ENCODE measurements at regions of chr10 and their contacts with region 1.

Region 1: GRCh38 chr10:109883859-109884771 is 39.2 kb downstream of the XPNPEP1 start:
- DNase-seq: peak; percentile 72
- H3K4me3 ChIP-seq: no peak overlapping the region
- H3K27ac ChIP-seq: no peak overlapping the region
- H3K4me1 ChIP-seq: peaks cover 4% of the 10 kb centered on the region
- H3K27me3 ChIP-seq: no peaks in the 10 kb centered on the region
- CTCF ChIP-seq: peak; percentile 94 to 98

Region 2: GRCh38 chr10:109956454-109957091 is 72.5 kb after region 1 on chr10:
- CTCF ChIA-PET with region 1: no interaction called
- dilution Hi-C with region 1: no loop called
- in situ Hi-C with region 1: no loop called
- intact Hi-C with region 1: loop called (anchors 1 kb)
- DNase-seq: no peak
- H3K4me3 ChIP-seq: no peak overlapping the region
- H3K27ac ChIP-seq: no peak overlapping the region
- H3K4me1 ChIP-seq: no peaks in the 10 kb centered on the region
- H3K27me3 ChIP-seq: no peaks in the 10 kb centered on the region
- CTCF ChIP-seq: peak; percentile 56 to 60

Region 3: DNA sequence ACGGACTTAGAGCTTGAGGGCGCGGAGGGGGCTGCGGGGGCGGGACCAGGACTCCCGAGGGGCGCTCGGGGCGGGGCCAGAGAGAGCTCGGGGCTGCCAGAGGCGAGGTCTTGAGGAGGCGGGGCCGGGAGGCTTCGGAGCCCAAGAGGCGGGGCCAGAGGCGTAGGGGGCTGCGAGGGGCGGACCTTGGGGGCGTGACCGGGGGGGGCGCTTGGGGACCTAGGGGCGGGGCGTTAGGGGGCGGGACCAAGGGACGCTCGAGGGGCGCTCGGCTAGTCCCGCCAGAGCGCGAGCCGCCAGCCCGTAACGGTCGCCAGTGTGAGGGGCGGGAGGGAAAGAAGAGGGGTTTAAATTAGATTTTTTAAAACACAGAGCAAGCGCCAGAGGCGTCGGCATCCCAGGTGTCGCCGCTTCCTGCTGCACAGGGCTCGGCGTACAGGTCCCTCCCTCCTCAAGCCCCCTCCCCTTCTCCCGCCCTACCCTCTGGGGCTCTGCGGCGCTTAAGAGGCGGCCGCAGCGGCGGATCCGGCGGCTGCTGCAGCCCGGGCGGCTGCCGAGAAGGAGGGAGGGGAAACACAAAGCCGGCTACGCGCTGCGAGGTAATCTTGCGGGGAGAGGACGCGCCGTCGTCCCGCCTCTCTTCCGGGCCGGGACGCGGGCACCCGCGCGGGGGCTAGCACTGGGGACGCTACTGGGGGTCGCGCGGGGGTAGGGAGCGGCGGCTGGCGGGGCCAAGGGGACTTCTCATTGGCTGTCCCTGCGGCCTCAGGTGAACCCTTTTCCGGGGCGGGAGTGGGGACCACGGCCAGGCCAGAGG is 123.8 kb after region 1 on chr10 and contains the start of gene ADD3:
- CTCF ChIA-PET with region 1: interaction called, 3 read pairs
- dilution Hi-C with region 1: no loop called
- in situ Hi-C with region 1: no loop called
- intact Hi-C with region 1: loop called (anchors 1 kb)
- DNase-seq: peak; percentile 69
- H3K4me3 ChIP-seq: peak within 1 kb of the TSS; percentile 81 to 91 (median 85)
- H3K27ac ChIP-seq: peak within 1 kb of the TSS; percentile 34
- H3K4me1 ChIP-seq: peaks cover 30% of the 10 kb centered on the region
- H3K27me3 ChIP-seq: no peaks in the 10 kb centered on the region
- CTCF ChIP-seq: no peak
- total RNA-seq, gene ADD3: 24.8 to 67.5 TPM

Region 4: GRCh38 chr10:110137142-110137545 is 253.0 kb after region 1 on chr10:
- CTCF ChIA-PET with region 1: interaction called, 3 read pairs
- dilution Hi-C with region 1: no loop called
- in situ Hi-C with region 1: loop called in 1 of 2 experiments (anchors 5 kb)
- intact Hi-C with region 1: loop called (anchors 1 kb)
- DNase-seq: peak; percentile 61
- H3K4me3 ChIP-seq: no peak overlapping the region
- H3K27ac ChIP-seq: no peak overlapping the region
- H3K4me1 ChIP-seq: peaks cover 15% of the 10 kb centered on the region
- H3K27me3 ChIP-seq: no peaks in the 10 kb centered on the region
- CTCF ChIP-seq: peak; percentile 60 to 72

Region 5: DNA sequence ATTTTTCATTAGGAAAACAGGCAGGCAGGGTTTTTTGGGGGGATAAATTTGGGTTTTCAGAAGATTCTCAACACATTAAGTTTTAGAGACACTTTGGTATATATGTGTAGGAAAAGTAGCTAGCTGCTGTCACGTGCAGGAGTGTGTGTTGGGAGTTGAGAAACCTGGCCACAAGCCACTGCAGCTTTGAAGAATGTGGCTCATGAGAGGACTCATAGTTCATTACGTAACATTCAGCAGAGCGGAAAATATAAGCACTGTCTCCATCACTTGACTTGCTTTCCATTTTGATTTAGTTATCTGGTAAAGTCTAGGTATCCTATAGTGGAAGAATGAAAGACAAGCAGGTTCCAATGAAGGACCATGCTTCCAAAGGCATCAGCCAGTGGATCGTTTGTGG is 389.4 kb after region 1 on chr10:
- CTCF ChIA-PET with region 1: no interaction called
- dilution Hi-C with region 1: no loop called
- in situ Hi-C with region 1: loop called (anchors 25 kb)
- intact Hi-C with region 1: loop called (anchors 2 kb)
- DNase-seq: peak; percentile 81
- H3K4me3 ChIP-seq: no peak overlapping the region
- H3K27ac ChIP-seq: no peak overlapping the region
- H3K4me1 ChIP-seq: peaks cover 11% of the 10 kb centered on the region
- H3K27me3 ChIP-seq: no peaks in the 10 kb centered on the region
- CTCF ChIP-seq: no peak

Measured in mammary epithelial cell (primary cell).